Dorsolateral prefrontal cortex (tissue), 120 donors: ENCODE measurements at regions of chr1 and their contacts with region 1.

Region 1: GRCh38 chr1:241998412-241998921 is 431 bp downstream of the MAP1LC3C start:
- DNase-seq: peak in 8 of 10 donors; percentile 12 to 60 (median 40)
- H3K4me3 ChIP-seq: peak overlapping the region in 47 of 59 donors; percentile 1 to 58 (median 33)
- H3K27ac ChIP-seq: no peak overlapping the region
- H3K27me3 ChIP-seq: no peaks in the 10 kb centered on the region
- CTCF ChIP-seq: peak; percentile 17 to 84 (median 66)

Region 2: DNA sequence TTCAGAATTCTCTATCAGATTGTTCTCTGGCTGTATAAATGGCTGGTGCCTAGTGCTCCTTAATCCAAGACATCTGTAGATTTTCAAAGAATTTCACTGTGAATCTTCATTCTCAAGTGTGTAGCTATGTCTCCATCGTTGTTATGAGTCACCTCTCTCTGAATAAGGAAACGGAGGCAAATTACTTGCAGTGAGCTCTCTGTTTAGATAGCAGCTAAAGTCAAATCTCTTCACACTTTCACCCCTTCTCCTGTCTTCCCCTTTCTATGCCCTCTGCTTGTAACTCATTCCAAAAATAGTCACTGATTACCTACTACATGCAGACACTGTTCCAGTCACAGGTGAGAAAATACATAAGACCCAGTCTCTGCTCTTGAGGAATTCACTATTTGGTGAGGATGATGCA is 398.0 kb before region 1 on chr1:
- intact Hi-C with region 1: loop called in 1 of 2 experiments (anchors 10 kb)
- DNase-seq: no peak
- H3K4me3 ChIP-seq: no peak overlapping the region
- H3K27ac ChIP-seq: peak overlapping the region in 7 of 59 donors; percentile 12 to 68 (median 51)
- H3K27me3 ChIP-seq: no peaks in the 10 kb centered on the region
- CTCF ChIP-seq: no peak

Region 3: GRCh38 chr1:241895013-241895412 is 103.5 kb before region 1 on chr1:
- intact Hi-C with region 1: loop called (anchors 5 to 10 kb)
- DNase-seq: no peak
- H3K4me3 ChIP-seq: no peak overlapping the region
- H3K27ac ChIP-seq: no peak overlapping the region
- H3K27me3 ChIP-seq: no peaks in the 10 kb centered on the region
- CTCF ChIP-seq: no peak

Region 4: GRCh38 chr1:241950390-241950789 is 48.1 kb before region 1 on chr1:
- intact Hi-C with region 1: no loop called
- DNase-seq: no peak
- H3K4me3 ChIP-seq: no peak overlapping the region
- H3K27ac ChIP-seq: no peak overlapping the region
- H3K27me3 ChIP-seq: no peaks in the 10 kb centered on the region
- CTCF ChIP-seq: no peak